Head of caudate nucleus (tissue), 42 donors: ENCODE measurements at regions of chr9 and their contacts with region 1.

Region 1: GRCh38 chr9:7402334-7403027 is 397.1 kb downstream of the DMAC1 start:
- DNase-seq: peak in 5 of 42 donors; percentile 7 to 42 (median 25)

Region 2: GRCh38 chr9:6894135-6894534 is 508.3 kb before region 1 on chr9:
- intact Hi-C with region 1: no loop called
- DNase-seq: no peak

Region 3: DNA sequence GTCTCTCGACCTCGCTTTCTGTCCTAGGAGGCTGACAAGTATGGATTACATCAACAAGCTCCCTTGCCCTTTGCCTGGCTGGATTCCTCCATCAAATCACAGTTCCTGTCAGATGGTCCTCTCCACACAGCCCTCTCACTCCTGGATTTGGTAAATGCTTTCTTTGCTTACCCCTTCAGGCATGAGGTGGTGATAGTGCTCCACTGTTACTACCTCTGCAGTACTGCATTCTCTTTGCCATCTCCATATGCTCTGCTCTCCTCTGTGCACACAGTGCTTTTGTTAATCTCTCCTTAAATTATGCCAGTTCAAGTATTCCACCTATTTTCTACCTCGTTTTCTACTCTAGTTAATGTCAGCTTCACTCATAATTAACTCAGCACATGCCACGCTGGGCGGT is 117.9 kb after region 1 on chr9:
- intact Hi-C with region 1: no loop called
- DNase-seq: no peak

Region 4: GRCh38 chr9:7536310-7536939 is 133.9 kb after region 1 on chr9:
- intact Hi-C with region 1: loop called (anchors 5 kb)
- DNase-seq: peak in 36 of 42 donors; percentile 5 to 82 (median 50)